Heart right ventricle (tissue), 16 donors: ENCODE measurements at regions of chr17 and their contacts with region 1.

Region 1: GRCh38 chr17:47895856-47896671 is at the start of gene SP2:
- DNase-seq: peak; percentile 98 to 100
- ATAC-seq: peak; percentile 93 to 96 (median 96)
- H3K4me3 ChIP-seq: peak within 1 kb of the TSS; percentile 53 to 98 (median 80)
- H3K27ac ChIP-seq: peak within 1 kb of the TSS; percentile 96 to 100 (median 99)
- H3K4me1 ChIP-seq: peaks cover 10 to 58% (median 53%) of the 10 kb centered on the region in 9 donors
- H3K27me3 ChIP-seq: no peaks in the 10 kb centered on the region
- CTCF ChIP-seq: peak in 5 of 9 donors; percentile 13 to 47 (median 30)
- total RNA-seq, gene SP2: 13.0 to 18.3 (median 15.9) TPM

Region 2: GRCh38 chr17:47929218-47930000 is 33.3 kb after region 1 on chr17:
- intact Hi-C with region 1: no loop called
- DNase-seq: peak in 1 of 2 donors; percentile 31
- ATAC-seq: peak; percentile 57 to 87 (median 69)
- H3K4me3 ChIP-seq: no peak overlapping the region
- H3K27ac ChIP-seq: peak overlapping the region in 9 of 10 donors; percentile 25 to 73 (median 55)
- H3K4me1 ChIP-seq: peaks cover 0 to 22% (median 8%) of the 10 kb centered on the region in 9 donors
- H3K27me3 ChIP-seq: no peaks in the 10 kb centered on the region
- CTCF ChIP-seq: no peak

Region 3: DNA sequence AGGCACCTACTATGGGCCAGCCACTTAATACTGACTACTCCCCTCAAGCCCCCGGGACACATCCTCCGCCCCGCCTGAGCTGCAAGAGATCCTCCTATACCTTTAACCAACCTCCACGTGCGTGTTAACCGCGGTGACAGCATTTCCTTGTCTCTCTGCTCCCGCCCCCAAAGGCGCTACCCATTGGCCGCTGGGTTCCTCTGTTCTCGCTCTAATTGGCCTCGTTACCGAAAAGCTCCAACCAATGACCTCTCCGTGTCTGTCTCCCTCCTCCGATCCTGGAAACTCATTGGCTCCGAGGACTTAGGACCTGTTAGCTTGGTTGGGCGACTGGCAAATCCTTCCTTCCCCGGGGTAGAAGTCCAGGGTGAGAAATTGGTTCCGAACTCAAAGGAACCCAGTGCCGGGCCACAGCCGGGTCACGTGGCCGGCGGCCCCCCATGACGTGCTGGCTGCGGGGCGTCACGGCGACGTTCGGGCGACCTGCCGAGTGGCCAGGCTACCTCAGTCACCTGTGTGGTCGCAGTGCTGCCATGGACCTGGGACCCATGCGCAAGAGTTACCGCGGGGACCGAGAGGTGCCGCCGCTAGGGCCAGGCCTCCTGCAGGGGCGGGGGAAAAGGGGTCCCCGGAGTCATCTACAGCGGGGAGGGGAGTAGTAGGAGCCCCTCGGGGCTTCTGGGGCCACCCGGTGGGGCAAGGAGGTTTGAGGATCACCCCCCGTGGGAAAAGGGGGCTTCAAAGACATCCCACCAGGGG is 45.4 kb after region 1 on chr17 and contains the start of gene PNPO:
- intact Hi-C with region 1: loop called in 8 of 10 experiments (anchors 2 to 10 kb)
- DNase-seq: peak; percentile 87 to 96
- ATAC-seq: peak; percentile 96 to 99 (median 98)
- H3K4me3 ChIP-seq: peak within 1 kb of the TSS; percentile 63 to 99 (median 86)
- H3K27ac ChIP-seq: peak within 1 kb of the TSS in 9 of 10 donors; percentile 78 to 90 (median 84)
- H3K4me1 ChIP-seq: peaks cover 0 to 43% (median 30%) of the 10 kb centered on the region in 9 donors
- H3K27me3 ChIP-seq: no peaks in the 10 kb centered on the region
- CTCF ChIP-seq: peak in 2 of 9 donors; percentile 10 to 14
- total RNA-seq, gene PNPO: 22.8 to 37.0 (median 31.5) TPM

Region 4: DNA sequence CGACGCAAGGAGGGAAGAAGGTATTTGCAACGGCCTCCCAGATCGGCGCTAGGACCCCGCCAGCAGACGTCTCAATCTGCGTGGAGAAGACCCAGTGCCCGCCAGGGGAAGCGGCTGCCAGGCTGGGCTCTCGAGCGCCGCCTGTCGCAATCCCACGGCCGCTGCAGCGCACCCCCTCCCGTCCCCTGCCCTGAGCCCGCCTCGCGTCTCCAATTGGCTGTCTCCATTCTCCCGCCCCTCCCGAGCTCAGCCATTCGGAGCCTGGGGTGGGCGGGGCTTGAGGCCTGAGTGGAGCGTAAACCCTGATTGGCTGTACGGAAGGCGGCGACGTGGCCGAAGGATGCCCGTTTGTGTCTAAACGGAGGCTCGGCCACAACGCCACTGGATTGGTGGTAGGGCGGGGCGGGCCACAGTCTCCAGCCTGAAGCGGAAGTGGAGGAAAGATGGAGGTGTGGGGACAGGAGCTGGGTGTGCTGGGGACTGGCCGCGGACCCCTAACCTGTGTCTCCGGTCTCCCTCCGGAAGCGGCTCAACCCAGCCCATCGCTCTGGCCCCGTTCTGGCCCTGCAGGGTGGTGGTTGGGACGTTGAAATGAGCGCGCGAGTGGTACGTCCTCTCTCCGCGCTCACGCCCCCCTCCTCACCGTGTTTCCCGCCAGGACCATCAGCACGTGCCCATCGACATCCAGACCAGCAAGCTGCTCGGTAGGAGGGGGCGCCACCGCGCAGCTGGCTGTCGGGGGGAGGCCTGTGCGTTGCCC is 74.8 kb after region 1 on chr17 and contains the start of gene CDK5RAP3:
- intact Hi-C with region 1: loop called in 5 of 10 experiments (anchors 1 to 2 kb)
- DNase-seq: peak; percentile 100
- ATAC-seq: peak; percentile 99 to 100 (median 100)
- H3K4me3 ChIP-seq: peak within 1 kb of the TSS; percentile 62 to 98 (median 92)
- H3K27ac ChIP-seq: peak within 1 kb of the TSS in 9 of 10 donors; percentile 47 to 91 (median 84)
- H3K4me1 ChIP-seq: peaks cover 4 to 24% (median 15%) of the 10 kb centered on the region in 9 donors
- H3K27me3 ChIP-seq: no peaks in the 10 kb centered on the region
- CTCF ChIP-seq: peak in 8 of 9 donors; percentile 88 to 100 (median 96)
- total RNA-seq, gene CDK5RAP3: 44.0 to 71.2 (median 62.3) TPM

Region 5: GRCh38 chr17:48718761-48719641 is 822.9 kb after region 1 on chr17:
- intact Hi-C with region 1: no loop called
- DNase-seq: no peak
- ATAC-seq: no peak
- H3K4me3 ChIP-seq: no peak overlapping the region
- H3K27ac ChIP-seq: no peak overlapping the region
- H3K4me1 ChIP-seq: peaks cover 0 to 30% (median 22%) of the 10 kb centered on the region in 9 donors
- H3K27me3 ChIP-seq: peaks cover 61 to 100% (median 100%) of the 10 kb centered on the region in 7 donors
- CTCF ChIP-seq: no peak